ENCODE measurements at regions of chr1 and their contacts with region 1.

Region 1: DNA sequence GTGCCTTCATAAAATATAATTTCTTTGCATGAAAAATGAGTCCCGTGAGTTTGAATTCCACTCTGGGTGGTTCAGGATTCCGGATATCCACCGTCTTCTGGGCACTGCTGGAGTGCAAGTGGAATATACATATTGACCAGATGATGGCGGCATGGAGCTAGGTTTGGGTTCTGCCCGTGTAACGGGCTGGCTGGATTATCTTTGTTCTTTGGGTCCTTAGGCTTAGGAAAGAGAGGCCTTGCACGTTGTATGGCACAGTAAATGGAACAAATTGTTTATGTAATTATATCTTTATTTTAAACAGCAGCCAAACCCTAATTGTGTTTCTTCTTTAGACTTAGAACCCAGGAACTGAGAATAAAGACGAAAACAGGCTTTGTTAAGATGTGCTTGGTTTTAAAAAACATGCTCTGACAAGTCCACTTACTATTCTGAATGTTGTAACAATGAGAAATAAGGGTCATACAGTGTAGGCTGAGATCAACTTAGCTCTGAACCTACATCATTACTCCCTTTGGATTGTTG is 13.5 kb upstream of the ACBD6 start:
- DNase-seq: peak; percentile 41
- H3K4me3 Mint-ChIP-seq: no peak overlapping the region
- H3K27ac Mint-ChIP-seq: no peak overlapping the region
- H3K4me1 Mint-ChIP-seq: no peaks in the 10 kb centered on the region
- H3K27me3 Mint-ChIP-seq: peaks cover 9% of the 10 kb centered on the region

Region 2: DNA sequence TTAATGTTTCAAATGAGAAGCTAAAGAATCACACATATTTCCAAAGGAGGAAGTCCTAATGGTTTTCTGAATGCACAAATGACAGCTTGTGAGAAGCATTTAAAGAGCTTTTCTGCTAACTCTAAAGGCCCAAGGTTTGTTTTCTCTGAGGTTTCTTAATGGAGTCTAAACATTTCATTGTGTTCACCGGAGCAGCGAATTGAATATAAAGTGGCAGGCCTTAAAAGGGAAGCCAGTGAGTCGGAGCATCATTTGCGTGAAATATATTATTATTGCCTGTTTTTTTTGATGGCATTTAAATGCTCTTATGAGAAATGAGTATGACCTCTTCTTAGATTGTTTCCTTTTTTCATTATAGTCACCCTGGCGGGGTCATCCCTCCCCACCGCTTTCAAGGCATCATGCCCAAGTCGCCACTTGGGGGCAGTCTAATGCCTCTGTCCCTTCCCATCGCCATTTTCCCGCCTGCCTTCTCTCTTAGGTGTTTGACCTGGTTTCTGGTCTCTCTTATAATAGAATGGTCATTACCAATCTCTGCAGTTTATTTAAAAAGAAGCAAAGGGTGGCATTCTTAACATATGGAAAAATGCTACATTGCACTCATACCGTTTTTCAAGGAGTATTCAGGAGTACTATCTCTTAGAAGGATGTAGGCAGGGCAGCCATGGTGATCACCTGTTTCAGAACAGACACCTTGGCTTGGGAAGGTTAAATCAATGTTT is 17.5 kb after region 1 on chr1:
- intact Hi-C with region 1: loop called (anchors 1 kb)
- DNase-seq: peak; percentile 42
- H3K4me3 Mint-ChIP-seq: no peak overlapping the region
- H3K27ac Mint-ChIP-seq: no peak overlapping the region
- H3K4me1 Mint-ChIP-seq: no peaks in the 10 kb centered on the region
- H3K27me3 Mint-ChIP-seq: peaks cover 6% of the 10 kb centered on the region

Region 3: GRCh38 chr1:180778782-180779398 is 263.0 kb after region 1 on chr1:
- intact Hi-C with region 1: loop called (anchors 5 kb)
- DNase-seq: no peak
- H3K4me3 Mint-ChIP-seq: no peak overlapping the region
- H3K27ac Mint-ChIP-seq: no peak overlapping the region
- H3K4me1 Mint-ChIP-seq: no peaks in the 10 kb centered on the region
- H3K27me3 Mint-ChIP-seq: no peaks in the 10 kb centered on the region

Region 4: DNA sequence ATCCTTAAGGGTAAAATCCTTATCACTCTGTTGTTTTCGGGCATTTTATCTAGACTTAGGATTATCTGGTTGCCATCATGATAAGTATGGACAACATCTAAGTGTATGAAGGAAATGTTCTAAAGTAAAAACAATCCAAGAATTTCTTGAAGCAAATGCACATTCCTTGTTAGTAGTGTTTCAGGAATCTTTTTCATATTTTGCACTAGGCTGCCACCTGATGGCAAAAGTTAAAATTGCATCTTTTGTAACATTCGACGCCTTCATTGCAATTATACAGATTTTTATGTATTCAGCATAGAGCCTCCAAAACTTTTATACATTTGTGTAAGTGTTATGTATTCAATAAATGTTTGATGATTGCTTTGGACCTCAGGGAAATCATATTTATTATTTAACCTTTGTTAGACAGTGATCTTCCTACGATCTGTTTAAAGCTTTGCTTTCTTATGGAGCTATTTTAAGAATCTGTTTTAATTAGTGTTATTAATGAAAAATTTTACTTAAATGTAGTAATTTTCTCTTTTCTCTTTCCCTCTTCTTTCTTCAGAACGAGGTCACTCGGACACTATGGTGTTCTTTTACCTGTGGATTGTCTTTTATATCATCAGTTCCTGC is 347.3 kb after region 1 on chr1:
- intact Hi-C with region 1: loop called (anchors 5 kb)
- DNase-seq: no peak
- H3K4me3 Mint-ChIP-seq: no peak overlapping the region
- H3K27ac Mint-ChIP-seq: no peak overlapping the region
- H3K4me1 Mint-ChIP-seq: no peaks in the 10 kb centered on the region
- H3K27me3 Mint-ChIP-seq: no peaks in the 10 kb centered on the region

Region 5: DNA sequence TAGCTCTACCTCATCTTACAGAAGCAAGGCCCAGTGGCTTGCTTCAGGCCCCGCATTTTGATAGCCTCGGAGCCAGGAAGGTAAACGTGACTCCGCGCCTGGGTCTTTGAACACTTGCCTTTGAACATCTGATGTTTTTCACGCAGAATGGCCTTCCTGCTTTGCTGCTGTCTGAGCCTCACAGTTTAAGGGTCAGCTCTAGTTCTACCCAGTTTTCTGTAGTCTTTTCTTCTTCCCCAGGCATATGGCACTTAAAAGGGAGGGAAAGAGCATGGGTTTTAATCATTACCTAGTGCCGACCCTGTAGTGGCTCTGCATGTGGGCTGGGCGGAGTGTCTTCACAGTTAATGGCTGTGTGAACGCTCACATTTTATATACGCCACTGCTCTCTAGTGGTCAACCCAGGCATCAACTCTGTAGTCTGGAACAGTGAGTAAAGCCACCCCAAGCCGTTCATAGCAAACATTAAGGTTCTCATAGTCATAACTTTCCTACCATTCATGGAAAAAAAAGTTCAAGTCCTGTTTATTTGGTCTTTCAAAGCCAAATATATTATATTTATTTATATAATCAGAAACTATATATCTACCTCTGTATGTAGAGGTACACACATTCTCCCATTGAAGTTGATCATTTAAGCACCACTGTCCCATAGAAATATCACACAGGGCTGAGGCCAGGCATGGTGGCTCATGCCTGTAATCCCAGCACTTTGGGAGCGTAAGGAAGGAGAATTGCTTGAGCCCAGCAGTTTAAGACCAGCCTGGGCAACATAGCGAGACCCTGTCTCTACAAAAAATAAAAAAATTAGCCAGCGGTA is 650.7 kb after region 1 on chr1:
- intact Hi-C with region 1: loop called (anchors 2 kb)
- DNase-seq: peak; percentile 62
- H3K4me3 Mint-ChIP-seq: no peak overlapping the region
- H3K27ac Mint-ChIP-seq: no peak overlapping the region
- H3K4me1 Mint-ChIP-seq: peaks cover 6% of the 10 kb centered on the region
- H3K27me3 Mint-ChIP-seq: peaks cover 34% of the 10 kb centered on the region

Region 6: DNA sequence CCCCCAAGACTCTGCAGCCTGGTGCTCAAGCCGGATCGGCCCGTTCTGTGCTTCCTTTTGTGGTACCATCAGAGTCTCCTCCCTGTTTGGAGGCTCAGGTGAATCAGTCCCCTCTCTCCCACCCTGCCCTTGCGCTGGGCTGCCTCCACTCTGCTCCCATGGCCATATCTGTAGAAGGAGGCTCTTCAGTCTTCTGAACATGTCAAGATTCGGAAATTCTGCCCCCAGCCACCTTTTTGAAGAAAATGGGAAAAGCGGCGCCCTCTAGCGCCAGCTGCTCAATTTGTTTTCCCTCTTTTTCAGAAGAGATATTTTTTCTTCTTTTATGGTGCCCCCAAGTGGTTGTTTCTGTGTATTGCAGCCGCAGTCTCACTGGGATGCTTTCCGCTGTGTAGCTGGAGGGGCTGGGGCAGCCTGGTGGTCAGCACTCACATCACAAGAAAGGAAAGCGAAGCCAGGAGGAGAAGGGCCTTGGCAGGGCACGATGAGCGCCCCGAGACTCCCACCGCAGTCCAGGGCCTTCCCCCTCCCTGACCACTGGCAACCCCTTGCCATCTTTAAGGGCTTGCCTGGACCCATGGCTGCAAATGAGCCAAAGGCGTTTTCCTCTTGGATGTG is 909.0 kb after region 1 on chr1:
- intact Hi-C with region 1: loop called (anchors 5 kb)
- DNase-seq: peak; percentile 66
- H3K4me3 Mint-ChIP-seq: no peak overlapping the region
- H3K27ac Mint-ChIP-seq: no peak overlapping the region
- H3K4me1 Mint-ChIP-seq: no peaks in the 10 kb centered on the region
- H3K27me3 Mint-ChIP-seq: peaks cover 14% of the 10 kb centered on the region

Measured in activated T-helper 1 cell treated with anti-CD3 and anti-CD28 coated beads, Interleukin-12 subunit alpha, Interleukin-12 subunit beta, Interleukin-2, Interleukin-4 antibody, amounts not matched to agents 30 ng/mL and 10 ng/mL and 1 ng/mL, durations not matched to agents 14 hours and 24 hours and 36 hours (primary cell).